Breast epithelium (tissue), 4 donors: ENCODE measurements at regions of chr2 and their contacts with region 1.

Region 1: DNA sequence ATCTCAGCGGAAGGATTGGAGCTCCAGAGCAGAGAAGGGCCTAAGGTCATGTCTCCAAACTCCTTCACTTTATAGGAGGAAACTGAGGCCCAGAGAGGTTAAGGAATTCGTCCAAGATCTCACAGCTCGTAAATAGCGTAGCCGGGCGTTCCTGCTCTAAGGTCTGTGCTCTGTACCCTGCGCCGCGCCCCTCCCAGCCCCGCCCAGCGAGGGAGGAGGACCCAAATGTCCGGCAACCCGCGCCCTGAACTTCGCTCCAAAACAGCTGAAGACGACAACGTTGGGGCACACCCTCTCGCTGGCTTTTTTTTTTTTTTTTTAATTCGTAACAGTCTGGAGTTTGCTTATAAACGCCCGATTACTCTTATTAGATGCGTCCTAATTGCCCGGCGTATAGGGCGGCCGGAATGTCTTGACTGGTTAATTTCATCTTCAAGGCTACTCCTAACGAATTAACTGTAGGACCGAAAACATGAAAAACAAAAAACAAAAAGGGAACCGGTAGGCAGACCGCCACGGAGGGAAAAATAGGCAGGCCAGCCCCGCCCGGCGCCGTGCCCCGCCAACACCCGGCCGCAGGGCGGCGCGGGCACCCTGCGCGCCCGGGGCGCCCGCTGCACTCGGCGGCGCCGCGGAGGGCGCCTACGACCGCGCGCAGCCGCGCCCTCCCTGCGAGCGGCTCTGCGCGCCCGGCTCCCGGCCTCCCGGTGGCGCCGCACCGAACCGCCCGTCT is 928 bp upstream of the FOSL2 start:
- DNase-seq: peak; percentile 93 to 94
- H3K4me3 ChIP-seq: peak overlapping the region; percentile 74 to 92 (median 92)
- H3K27ac ChIP-seq: peak overlapping the region; percentile 100
- H3K4me1 ChIP-seq: peaks cover 0 to 5% of the 10 kb centered on the region in 2 donors
- H3K27me3 ChIP-seq: no peaks in the 10 kb centered on the region
- CTCF ChIP-seq: peak in 1 of 3 donors; percentile 49
- POLR2A ChIP-seq: peak; percentile 44

Region 2: GRCh38 chr2:27710640-27711430 is 680.9 kb before region 1 on chr2:
- intact Hi-C with region 1: loop called (anchors 1 kb)
- DNase-seq: no peak
- H3K4me3 ChIP-seq: no peak overlapping the region
- H3K27ac ChIP-seq: no peak overlapping the region
- H3K4me1 ChIP-seq: no peaks in the 10 kb centered on the region
- H3K27me3 ChIP-seq: no peaks in the 10 kb centered on the region
- CTCF ChIP-seq: no peak
- POLR2A ChIP-seq: no peak

Region 3: DNA sequence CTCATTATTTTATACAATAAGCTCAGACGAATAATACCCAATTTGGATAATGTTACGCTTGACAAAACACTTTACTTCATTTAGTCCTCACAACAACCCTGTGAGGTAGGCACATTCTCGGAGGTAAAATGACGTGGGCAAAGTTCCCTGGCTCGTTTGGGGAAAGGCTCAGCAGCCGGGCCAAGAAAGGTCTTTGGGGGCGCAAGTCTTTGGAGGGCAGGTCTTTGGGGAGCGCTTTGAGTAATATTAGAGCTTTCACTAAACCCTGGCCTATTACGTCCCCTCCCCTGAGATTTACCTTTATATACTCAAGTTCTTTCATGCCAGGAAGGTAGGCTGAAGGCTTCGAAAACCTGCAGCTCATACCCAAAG is 502.0 kb before region 1 on chr2:
- intact Hi-C with region 1: loop called (anchors 2 kb)
- DNase-seq: no peak
- H3K4me3 ChIP-seq: peak overlapping the region; percentile 51 to 88 (median 80)
- H3K27ac ChIP-seq: peak overlapping the region; percentile 98
- H3K4me1 ChIP-seq: peaks cover 0 to 19% of the 10 kb centered on the region in 2 donors
- H3K27me3 ChIP-seq: no peaks in the 10 kb centered on the region
- CTCF ChIP-seq: no peak
- POLR2A ChIP-seq: no peak